Activated CD4-positive, alpha-beta T cell treated with anti-CD3 and anti-CD28 coated beads for 36 hours (primary cell): ENCODE measurements at regions of chr3 and their contacts with region 1.

Region 1: DNA sequence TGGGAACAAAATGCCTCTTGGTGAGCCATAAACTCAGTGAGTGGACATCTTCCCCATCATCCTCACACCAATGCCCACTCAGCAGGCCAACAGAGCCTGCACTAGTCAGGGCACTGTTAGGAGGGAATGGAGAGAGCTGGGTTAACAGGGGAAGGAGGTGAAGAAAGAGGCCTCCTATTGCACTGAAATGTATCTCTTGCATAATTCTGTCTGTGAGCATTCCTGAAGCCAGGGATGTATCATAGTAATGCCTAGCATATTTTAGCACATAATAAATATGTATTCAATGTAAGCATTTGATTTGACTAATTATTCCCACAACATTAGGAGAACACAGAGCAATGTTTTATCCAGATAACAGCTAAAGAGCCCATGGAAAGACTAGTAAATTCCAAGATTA is 81.2 kb downstream of the ANO10 start:
- DNase-seq: no peak
- ATAC-seq: no peak
- H3K4me3 Mint-ChIP-seq: no peak overlapping the region
- H3K27ac Mint-ChIP-seq: no peak overlapping the region
- H3K4me1 Mint-ChIP-seq: peaks cover 4% of the 10 kb centered on the region
- H3K27me3 Mint-ChIP-seq: no peaks in the 10 kb centered on the region

Region 2: GRCh38 chr3:43638594-43639447 is 98.2 kb after region 1 on chr3:
- CTCF ChIA-PET with region 1: interaction called, 3 read pairs
- POLR2A ChIA-PET with region 1: no interaction called
- intact Hi-C with region 1: loop called (anchors 1 kb)
- DNase-seq: peak; percentile 73
- ATAC-seq: peak; percentile 68
- H3K4me3 Mint-ChIP-seq: no peak overlapping the region
- H3K27ac Mint-ChIP-seq: no peak overlapping the region
- H3K4me1 Mint-ChIP-seq: no peaks in the 10 kb centered on the region
- H3K27me3 Mint-ChIP-seq: peaks cover under 1% of the 10 kb centered on the region

Region 3: DNA sequence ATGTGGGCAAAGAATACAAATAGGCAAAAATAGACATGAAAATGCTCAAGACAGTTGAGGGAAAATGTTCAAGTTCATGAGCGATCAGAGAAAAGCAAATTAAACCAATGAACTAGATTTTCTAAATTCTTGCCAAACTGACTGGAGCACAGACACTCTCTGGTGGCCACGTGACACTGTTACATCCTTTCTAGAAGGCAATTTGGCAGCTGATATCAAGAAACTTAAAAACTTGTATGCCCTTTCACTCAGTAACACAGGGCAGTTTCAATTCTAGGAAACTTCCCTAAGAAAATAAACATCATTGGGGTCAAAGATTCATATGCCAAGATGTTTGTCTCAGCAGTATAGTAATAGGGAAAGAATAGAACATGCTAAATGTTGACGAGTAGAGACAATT is 202.3 kb after region 1 on chr3:
- CTCF ChIA-PET with region 1: no interaction called
- POLR2A ChIA-PET with region 1: no interaction called
- intact Hi-C with region 1: loop called in 1 of 2 experiments (anchors 1 kb)
- DNase-seq: no peak
- ATAC-seq: no peak
- H3K4me3 Mint-ChIP-seq: no peak overlapping the region
- H3K27ac Mint-ChIP-seq: no peak overlapping the region
- H3K4me1 Mint-ChIP-seq: no peaks in the 10 kb centered on the region
- H3K27me3 Mint-ChIP-seq: no peaks in the 10 kb centered on the region

Region 4: GRCh38 chr3:43998836-43999727 is 458.5 kb after region 1 on chr3:
- CTCF ChIA-PET with region 1: no interaction called
- POLR2A ChIA-PET with region 1: no interaction called
- intact Hi-C with region 1: loop called in 1 of 2 experiments (anchors 10 kb)
- DNase-seq: no peak
- ATAC-seq: no peak
- H3K4me3 Mint-ChIP-seq: peak overlapping the region; percentile 58
- H3K27ac Mint-ChIP-seq: no peak overlapping the region
- H3K4me1 Mint-ChIP-seq: peaks cover 39% of the 10 kb centered on the region
- H3K27me3 Mint-ChIP-seq: peaks cover 68% of the 10 kb centered on the region

Region 5: DNA sequence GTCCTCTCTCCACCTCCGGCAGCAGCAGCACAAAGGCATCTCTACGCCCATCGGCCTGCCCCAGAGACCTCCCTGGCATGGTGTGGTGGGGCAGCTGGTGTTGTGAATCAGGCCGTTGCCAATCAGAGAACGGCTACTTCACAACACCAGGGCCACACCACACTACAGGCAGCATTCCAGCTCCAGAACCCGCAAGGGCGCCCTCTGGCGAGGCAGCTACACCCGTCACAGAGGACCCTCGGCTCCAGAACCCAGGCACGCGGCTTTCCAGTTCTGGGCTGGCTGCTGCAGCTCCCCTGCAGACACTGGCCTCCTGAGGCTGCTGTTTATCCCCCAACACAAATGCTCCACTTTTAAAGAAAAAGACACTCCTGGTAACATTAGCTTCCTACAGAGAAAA is 573.5 kb after region 1 on chr3:
- CTCF ChIA-PET with region 1: no interaction called
- POLR2A ChIA-PET with region 1: no interaction called
- intact Hi-C with region 1: loop called in 1 of 2 experiments (anchors 10 kb)
- DNase-seq: peak; percentile 72
- ATAC-seq: peak; percentile 63
- H3K4me3 Mint-ChIP-seq: no peak overlapping the region
- H3K27ac Mint-ChIP-seq: no peak overlapping the region
- H3K4me1 Mint-ChIP-seq: no peaks in the 10 kb centered on the region
- H3K27me3 Mint-ChIP-seq: peaks cover 14% of the 10 kb centered on the region

Region 6: DNA sequence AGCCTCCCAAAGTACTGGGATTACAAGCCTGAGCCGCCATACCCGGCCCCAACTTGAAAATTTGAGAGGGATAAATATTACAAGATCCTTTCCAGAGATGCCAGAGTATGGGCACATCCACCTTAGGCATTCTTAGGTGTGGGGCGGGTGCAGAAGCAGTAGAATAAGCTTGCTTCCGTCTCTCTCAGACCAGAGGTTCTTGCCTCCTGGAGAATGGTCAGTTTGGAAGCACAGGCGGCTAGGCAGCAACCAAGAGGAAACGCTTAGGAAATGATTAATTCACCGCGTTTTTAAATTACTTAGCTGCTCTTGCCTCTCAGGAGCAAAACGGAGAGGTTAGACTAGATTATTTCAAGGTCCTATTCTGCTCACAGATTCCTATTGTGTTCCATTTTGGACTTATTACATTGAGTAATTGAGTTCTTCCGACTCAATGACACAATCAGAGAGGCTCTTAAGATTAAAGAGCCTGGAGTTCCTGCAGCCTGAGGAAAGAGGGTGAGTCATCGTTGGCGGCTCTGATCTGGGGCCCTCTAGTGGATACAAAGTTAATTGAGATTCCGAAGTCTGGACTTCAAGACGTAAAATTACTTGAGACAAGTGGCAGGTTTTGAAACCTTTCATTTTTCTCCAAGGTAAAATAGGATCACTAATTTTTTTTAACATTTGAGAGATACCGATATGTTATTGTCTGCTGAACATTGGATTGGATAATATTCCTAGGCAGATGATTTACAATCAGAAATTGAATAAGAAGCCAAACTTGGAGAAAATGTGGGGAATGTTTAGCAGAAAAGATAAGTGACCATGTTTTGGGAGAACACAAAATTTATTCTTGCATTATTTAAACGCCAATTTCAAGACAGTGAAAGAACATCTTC is 695.2 kb after region 1 on chr3:
- CTCF ChIA-PET with region 1: interaction called, 4 read pairs
- POLR2A ChIA-PET with region 1: no interaction called
- intact Hi-C with region 1: loop called (anchors 1 to 10 kb)
- DNase-seq: peak; percentile 73
- ATAC-seq: peak; percentile 84
- H3K4me3 Mint-ChIP-seq: no peak overlapping the region
- H3K27ac Mint-ChIP-seq: no peak overlapping the region
- H3K4me1 Mint-ChIP-seq: peaks cover 6% of the 10 kb centered on the region
- H3K27me3 Mint-ChIP-seq: peaks cover 7% of the 10 kb centered on the region